Spleen (tissue), 13 donors: ENCODE measurements at regions of chr3 and their contacts with region 1.

Region 1: GRCh38 chr3:194194051-194194756 is 58.3 kb downstream of the HES1 start:
- DNase-seq: no peak
- H3K4me3 ChIP-seq: no peak overlapping the region
- H3K27ac ChIP-seq: no peak overlapping the region
- H3K4me1 ChIP-seq: peaks cover 2 to 28% (median 11%) of the 10 kb centered on the region in 6 donors
- H3K27me3 ChIP-seq: peaks cover 0 to 17% (median 0%) of the 10 kb centered on the region in 7 donors
- CTCF ChIP-seq: no peak
- POLR2A ChIP-seq: no peak

Region 2: GRCh38 chr3:194265483-194265892 is 71.3 kb after region 1 on chr3:
- intact Hi-C with region 1: loop called (anchors 10 kb)
- DNase-seq: peak; percentile 90
- H3K4me3 ChIP-seq: peak overlapping the region in 1 of 8 donors; percentile 4
- H3K27ac ChIP-seq: peak overlapping the region in 6 of 8 donors; percentile 26 to 72 (median 62)
- H3K4me1 ChIP-seq: peaks cover 10 to 57% (median 46%) of the 10 kb centered on the region in 6 donors
- H3K27me3 ChIP-seq: peaks cover 0 to 20% (median 0%) of the 10 kb centered on the region in 7 donors
- CTCF ChIP-seq: no peak
- POLR2A ChIP-seq: no peak